Activated CD8-positive, alpha-beta T cell treated with anti-CD3 and anti-CD28 coated beads, Interleukin-2, amount 10 ng/mL, durations not matched to agents 7 days and 5 days (primary cell): ENCODE measurements at regions of chr11 and their contacts with region 1.

Region 1: GRCh38 chr11:67439321-67439883 is 1.9 kb upstream of the PTPRCAP start:
- DNase-seq: peak; percentile 61
- ATAC-seq: no peak
- H3K4me3 Mint-ChIP-seq: peak overlapping the region; percentile 84
- H3K27ac Mint-ChIP-seq: peak overlapping the region; percentile 96
- H3K4me1 Mint-ChIP-seq: peaks cover 56% of the 10 kb centered on the region
- H3K27me3 Mint-ChIP-seq: no peaks in the 10 kb centered on the region

Region 2: GRCh38 chr11:67420646-67421420 is 18.6 kb before region 1 on chr11:
- CTCF ChIA-PET with region 1: interaction called, 10 read pairs
- POLR2A ChIA-PET with region 1: interaction called, 76 read pairs
- DNase-seq: peak; percentile 99
- ATAC-seq: peak; percentile 86
- H3K4me3 Mint-ChIP-seq: peak overlapping the region; percentile 79
- H3K27ac Mint-ChIP-seq: peak overlapping the region; percentile 86
- H3K4me1 Mint-ChIP-seq: peaks cover 70% of the 10 kb centered on the region
- H3K27me3 Mint-ChIP-seq: no peaks in the 10 kb centered on the region

Region 3: DNA sequence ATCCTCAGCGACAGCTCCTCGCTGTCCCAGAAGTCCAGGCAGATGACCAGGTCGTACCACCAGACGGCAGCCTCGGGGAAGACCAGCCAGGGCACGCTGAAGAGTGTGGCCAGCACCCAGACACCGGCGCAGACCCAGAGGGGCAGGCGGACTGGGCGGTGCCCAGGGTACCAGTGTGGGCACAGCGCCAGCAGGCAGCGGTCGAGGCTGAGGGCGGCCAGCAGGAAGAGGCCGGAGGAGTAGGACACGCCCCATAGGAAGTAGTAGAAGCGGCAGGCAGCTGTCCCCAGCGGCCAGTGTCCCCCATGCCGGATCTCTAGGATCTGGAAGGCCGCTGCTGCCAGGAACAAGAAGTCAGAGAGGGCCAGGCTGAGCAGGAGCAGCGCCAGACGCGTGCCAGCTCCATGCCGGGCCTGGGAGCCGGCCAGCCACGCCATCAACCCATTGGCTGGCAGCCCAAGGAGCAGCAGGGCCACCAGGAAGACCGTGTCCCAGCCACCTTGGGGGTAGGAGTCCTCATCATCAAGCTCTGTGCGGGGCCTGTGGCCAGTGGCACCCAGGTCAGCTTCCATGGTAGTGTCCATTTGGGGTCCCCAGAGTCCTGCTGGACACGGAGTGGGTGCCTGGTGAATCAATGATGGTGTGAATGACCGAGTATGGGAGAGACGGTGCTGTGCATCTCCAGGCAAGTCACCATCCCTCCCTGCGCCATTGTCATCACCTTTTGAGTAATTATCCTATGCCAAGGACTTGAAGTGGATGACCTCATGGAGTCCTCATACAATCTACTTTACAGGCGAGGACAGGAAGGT is 12.9 kb after region 1 on chr11 and contains the start of gene GPR152:
- CTCF ChIA-PET with region 1: no interaction called
- POLR2A ChIA-PET with region 1: interaction called, 34 read pairs
- DNase-seq: no peak
- ATAC-seq: no peak
- H3K4me3 Mint-ChIP-seq: no peak within 1 kb of the TSS
- H3K27ac Mint-ChIP-seq: no peak within 1 kb of the TSS
- H3K4me1 Mint-ChIP-seq: peaks cover 9% of the 10 kb centered on the region
- H3K27me3 Mint-ChIP-seq: peaks cover under 1% of the 10 kb centered on the region
- total RNA-seq, gene GPR152: not detected

Region 4: GRCh38 chr11:67482825-67483798 is 43.7 kb after region 1 on chr11 and contains the start of gene AIP:
- CTCF ChIA-PET with region 1: interaction called, 4 read pairs
- POLR2A ChIA-PET with region 1: interaction called, 84 read pairs
- DNase-seq: peak; percentile 99
- ATAC-seq: peak; percentile 87
- H3K4me3 Mint-ChIP-seq: peak within 1 kb of the TSS; percentile 93
- H3K27ac Mint-ChIP-seq: peak within 1 kb of the TSS; percentile 99
- H3K4me1 Mint-ChIP-seq: peaks cover 53% of the 10 kb centered on the region
- H3K27me3 Mint-ChIP-seq: peaks cover 5% of the 10 kb centered on the region
- total RNA-seq, gene AIP: 156 to 163 TPM

Region 5: DNA sequence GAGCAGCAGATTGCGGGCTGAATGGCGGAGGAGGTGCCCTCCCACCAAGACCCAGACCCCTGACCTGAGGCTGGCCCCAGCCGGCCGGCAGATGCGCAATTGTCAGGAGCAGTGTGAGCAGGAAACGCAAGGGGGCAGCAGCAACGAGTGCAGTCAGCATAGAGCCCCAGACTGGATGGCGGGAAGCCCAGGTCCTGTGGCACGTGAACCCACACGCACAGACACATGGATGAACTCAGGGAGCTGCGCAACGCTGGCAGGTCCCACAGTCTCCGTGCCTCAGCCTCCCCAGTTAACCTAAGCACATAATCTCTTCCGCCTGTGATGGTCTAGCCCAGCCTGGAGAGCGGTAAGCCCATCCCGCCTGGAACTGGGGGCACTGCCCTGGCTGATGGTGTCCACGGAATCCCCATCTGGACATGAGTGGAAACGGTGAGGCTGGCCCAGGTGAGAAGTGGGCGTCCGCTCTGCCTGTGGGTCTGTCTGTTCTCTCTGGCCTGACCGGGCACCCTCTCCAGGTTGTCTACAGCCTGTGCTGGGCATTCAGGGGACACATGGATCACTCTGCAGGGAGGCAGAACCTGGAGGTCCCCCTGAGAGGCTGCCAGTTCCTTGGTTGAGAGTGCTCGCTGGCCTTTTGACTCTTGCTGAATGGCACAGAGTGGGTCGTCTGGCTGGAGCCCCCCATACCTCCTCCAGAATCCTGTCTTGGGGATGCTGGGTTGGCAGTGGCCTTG is 200.8 kb after region 1 on chr11:
- CTCF ChIA-PET with region 1: no interaction called
- POLR2A ChIA-PET with region 1: no interaction called
- DNase-seq: peak; percentile 69
- ATAC-seq: peak; percentile 80
- H3K4me3 Mint-ChIP-seq: no peak overlapping the region
- H3K27ac Mint-ChIP-seq: no peak overlapping the region
- H3K4me1 Mint-ChIP-seq: peaks cover 16% of the 10 kb centered on the region
- H3K27me3 Mint-ChIP-seq: peaks cover 2% of the 10 kb centered on the region